ENCODE measurements at regions of chr3 and their contacts with region 1.

Region 1: DNA sequence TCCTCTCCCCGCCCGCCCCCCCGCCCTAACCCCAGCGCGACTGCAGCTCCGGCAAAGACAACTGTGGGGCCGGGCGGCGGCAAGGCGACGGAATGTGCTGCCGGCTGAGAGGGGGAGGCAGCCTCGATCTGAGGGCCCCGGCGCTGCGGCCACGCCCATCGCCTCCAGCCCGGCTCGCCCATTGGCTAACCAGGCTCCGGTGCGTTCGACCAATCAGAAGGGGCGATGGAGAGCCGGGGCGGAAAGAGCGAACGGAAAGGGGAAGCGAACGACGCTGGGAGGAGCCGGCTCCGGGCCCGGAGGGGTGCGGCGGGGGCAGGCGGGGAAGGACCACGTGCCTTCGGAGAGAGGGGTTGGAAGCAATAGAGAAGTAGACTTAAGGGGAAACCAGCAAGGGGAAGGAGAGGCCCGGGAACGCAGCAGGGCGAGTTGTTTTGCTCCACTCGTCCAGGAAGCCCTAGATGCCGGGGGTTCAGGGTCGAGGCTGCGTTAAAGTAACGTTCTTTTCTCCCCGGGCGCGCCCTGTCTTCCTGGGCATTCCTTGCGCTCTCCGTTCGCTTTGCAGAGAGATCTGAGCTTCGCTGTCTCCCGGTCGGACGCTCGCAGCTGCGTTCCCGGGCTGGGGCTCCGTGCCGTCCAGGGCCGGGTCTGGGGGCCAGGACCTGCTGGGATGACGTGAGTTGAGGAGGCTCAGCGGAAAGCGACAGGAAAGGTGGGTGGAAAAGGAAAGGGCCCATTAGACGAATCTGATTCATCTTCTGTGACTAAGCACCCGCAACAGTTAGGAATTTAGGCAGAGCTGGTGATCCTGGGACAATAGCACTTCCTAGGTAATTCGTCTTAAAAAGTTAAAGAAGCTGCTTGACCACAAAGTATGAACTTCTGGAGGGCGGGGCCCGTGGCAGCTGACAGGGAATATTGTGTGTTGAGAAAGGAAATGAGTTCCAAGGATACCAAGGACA is at the start of gene KPNA4:
- DNase-seq: peak; percentile 99
- ATAC-seq: peak; percentile 99
- H3K4me3 ChIP-seq: peak within 1 kb of the TSS; percentile 84 to 95
- H3K27ac ChIP-seq: peak within 1 kb of the TSS; percentile 94 to 96
- H3K4me1 ChIP-seq: no peaks in the 10 kb centered on the region
- H3K27me3 ChIP-seq: no peaks in the 10 kb centered on the region
- total RNA-seq, gene KPNA4: 58.1 to 61.1 TPM

Region 2: GRCh38 chr3:160941885-160942494 is 376.3 kb after region 1 on chr3:
- intact Hi-C with region 1: loop called in 1 of 2 experiments (anchors 10 kb)
- DNase-seq: peak in 1 of 2 donors; percentile 57
- ATAC-seq: peak; percentile 83
- H3K4me3 ChIP-seq: no peak overlapping the region
- H3K27ac ChIP-seq: no peak overlapping the region
- H3K4me1 ChIP-seq: no peaks in the 10 kb centered on the region
- H3K27me3 ChIP-seq: no peaks in the 10 kb centered on the region

Measured in aorta (tissue), 5 donors.